ENCODE measurements at regions of chr18 and their contacts with region 1.

Region 1: DNA sequence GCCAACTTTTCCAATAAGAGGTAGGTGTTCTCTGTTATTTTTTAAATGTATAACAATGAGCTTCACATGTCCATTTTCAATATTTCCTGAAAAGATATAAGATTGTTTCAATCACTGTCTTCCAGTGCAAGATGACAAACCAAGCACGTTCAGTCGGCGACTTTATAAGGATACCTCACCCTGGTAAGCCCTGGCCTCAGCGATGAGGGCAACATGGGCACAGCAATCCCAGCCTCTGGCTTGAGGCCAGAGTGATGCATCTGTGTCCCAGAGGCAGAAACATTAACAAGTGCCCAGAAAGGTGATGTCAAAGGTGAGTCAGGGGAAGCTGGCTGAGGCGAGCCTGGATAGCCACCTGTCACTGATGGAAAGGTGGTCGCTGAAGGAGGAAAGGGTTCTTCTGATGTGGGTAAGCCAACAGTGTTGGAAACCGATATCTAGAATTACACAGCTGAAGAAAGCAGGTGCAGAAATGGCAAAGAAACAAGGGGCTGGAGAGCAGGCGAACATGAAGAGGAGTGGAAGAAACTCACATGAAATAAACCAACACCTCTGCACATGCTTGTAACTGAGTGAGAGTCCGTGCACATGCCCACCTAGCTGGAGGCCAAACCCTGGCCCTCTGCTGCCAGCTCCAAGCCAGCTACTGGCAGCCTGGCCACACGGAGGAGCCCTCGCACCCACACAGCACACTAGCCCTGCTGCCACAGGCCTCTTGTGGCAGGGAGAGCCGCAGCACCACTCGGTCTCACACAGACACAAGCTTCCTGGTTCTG is 65.5 kb downstream of the FBXO15 start:
- DNase-seq: peak; percentile 81
- H3K4me3 Mint-ChIP-seq: peak overlapping the region; percentile 69
- H3K27ac Mint-ChIP-seq: peak overlapping the region; percentile 73
- H3K4me1 Mint-ChIP-seq: peaks cover 14% of the 10 kb centered on the region
- H3K27me3 Mint-ChIP-seq: no peaks in the 10 kb centered on the region

Region 2: DNA sequence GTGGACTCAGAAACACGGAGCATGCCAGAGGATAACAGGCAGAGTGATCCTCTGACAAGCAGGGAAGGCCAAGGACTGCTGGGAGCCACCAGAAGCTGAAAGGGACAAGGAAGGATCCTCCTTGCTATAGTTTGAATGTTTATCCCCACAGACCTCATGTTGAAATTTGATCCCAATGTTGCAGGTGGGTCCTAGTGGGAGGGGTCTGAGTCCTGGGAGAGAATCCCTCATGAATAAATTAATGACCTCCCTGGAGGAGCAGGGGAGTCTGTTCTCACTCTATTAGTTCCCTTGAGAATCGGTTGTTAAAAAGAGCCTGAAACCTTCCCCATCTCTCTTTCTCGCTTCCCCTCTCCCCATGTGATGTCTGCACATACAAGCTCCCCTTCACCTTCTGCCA is 58.9 kb before region 1 on chr18:
- CTCF ChIA-PET with region 1: no interaction called
- POLR2A ChIA-PET with region 1: no interaction called
- intact Hi-C with region 1: no loop called
- DNase-seq: no peak
- H3K4me3 Mint-ChIP-seq: no peak overlapping the region
- H3K27ac Mint-ChIP-seq: no peak overlapping the region
- H3K4me1 Mint-ChIP-seq: no peaks in the 10 kb centered on the region
- H3K27me3 Mint-ChIP-seq: peaks cover 11% of the 10 kb centered on the region

Region 3: DNA sequence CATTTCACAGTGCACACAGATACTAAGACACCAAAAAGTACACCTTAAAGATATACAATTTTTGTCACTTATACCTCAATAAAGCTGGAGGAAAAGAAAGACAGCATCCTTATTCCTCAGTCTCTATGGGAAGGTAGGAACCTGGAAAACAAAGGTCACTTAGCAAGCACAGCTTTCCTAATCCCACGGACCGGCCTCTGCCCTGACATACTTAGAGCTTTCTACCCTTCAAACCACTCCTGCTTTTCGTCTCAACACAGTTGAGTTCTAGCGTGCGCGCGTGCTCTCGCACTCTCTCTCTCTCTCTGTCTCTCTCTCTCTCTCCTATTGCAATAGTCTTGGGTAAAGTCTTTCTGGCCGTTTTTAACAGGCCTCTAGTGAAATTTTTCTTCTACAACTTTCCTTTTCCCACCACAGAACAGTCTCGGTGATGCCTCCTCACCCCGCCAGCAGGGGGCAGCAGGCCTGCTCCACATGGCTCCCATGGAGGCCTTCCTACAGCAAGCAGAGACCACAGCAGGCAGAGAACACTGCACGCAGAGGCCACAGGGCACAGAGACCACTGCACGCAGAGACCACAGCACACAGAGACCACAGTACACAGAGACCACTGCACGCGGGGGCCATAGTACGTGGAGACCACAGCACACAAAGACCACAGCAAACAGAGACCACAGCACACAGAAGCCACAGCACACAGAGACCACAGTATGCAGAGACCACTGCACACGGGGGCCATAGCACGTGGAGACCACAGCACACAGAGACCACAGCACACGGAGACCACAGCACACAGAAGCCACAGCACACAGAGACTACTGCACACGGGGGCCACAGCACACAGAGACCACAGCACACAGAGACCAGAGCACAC is 41.5 kb before region 1 on chr18:
- CTCF ChIA-PET with region 1: interaction called, 7 read pairs
- POLR2A ChIA-PET with region 1: no interaction called
- intact Hi-C with region 1: loop called (anchors 1 kb)
- DNase-seq: peak; percentile 78
- H3K4me3 Mint-ChIP-seq: no peak overlapping the region
- H3K27ac Mint-ChIP-seq: no peak overlapping the region
- H3K4me1 Mint-ChIP-seq: no peaks in the 10 kb centered on the region
- H3K27me3 Mint-ChIP-seq: peaks cover 3% of the 10 kb centered on the region

Region 4: GRCh38 chr18:74116633-74117554 is 34.7 kb after region 1 on chr18:
- CTCF ChIA-PET with region 1: interaction called, 9 read pairs
- POLR2A ChIA-PET with region 1: no interaction called
- intact Hi-C with region 1: loop called (anchors 1 kb)
- DNase-seq: peak; percentile 27
- H3K4me3 Mint-ChIP-seq: no peak overlapping the region
- H3K27ac Mint-ChIP-seq: no peak overlapping the region
- H3K4me1 Mint-ChIP-seq: no peaks in the 10 kb centered on the region
- H3K27me3 Mint-ChIP-seq: no peaks in the 10 kb centered on the region

Region 5: DNA sequence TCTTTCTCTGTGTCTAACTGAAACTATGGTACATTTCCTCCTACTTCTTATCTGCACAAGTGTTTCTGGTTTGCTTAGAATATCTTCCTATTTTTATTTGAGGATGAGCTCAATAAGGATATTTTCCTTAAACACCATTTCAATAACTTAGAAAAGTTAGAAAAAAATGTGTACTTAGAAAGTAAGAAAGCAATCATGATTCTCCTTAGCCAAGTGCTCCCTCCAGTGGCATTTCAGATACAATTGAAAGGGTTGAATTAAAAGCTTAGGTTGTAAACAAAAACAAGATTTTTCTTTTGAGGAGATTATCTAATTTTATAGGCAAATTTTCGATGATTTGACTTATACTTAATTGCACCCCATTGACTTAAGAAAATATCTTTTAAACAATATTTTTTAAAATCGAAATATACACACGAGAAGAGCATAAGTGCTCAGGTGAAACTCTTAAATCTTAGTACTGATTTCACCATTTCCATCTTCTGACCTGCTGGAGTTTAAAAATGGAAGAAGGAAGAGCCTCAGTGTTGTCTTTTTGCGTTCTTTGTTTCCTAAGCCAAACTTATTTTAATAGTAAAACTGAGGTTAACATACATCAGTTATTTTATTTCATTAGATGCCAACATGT is 260.4 kb after region 1 on chr18:
- CTCF ChIA-PET with region 1: interaction called, 10 read pairs
- POLR2A ChIA-PET with region 1: no interaction called
- intact Hi-C with region 1: no loop called
- DNase-seq: no peak
- H3K4me3 Mint-ChIP-seq: no peak overlapping the region
- H3K27ac Mint-ChIP-seq: no peak overlapping the region
- H3K4me1 Mint-ChIP-seq: no peaks in the 10 kb centered on the region
- H3K27me3 Mint-ChIP-seq: peaks cover 6% of the 10 kb centered on the region